Stomach (tissue), 19 donors: ENCODE measurements at regions of chr20 and their contacts with region 1.

Region 1: DNA sequence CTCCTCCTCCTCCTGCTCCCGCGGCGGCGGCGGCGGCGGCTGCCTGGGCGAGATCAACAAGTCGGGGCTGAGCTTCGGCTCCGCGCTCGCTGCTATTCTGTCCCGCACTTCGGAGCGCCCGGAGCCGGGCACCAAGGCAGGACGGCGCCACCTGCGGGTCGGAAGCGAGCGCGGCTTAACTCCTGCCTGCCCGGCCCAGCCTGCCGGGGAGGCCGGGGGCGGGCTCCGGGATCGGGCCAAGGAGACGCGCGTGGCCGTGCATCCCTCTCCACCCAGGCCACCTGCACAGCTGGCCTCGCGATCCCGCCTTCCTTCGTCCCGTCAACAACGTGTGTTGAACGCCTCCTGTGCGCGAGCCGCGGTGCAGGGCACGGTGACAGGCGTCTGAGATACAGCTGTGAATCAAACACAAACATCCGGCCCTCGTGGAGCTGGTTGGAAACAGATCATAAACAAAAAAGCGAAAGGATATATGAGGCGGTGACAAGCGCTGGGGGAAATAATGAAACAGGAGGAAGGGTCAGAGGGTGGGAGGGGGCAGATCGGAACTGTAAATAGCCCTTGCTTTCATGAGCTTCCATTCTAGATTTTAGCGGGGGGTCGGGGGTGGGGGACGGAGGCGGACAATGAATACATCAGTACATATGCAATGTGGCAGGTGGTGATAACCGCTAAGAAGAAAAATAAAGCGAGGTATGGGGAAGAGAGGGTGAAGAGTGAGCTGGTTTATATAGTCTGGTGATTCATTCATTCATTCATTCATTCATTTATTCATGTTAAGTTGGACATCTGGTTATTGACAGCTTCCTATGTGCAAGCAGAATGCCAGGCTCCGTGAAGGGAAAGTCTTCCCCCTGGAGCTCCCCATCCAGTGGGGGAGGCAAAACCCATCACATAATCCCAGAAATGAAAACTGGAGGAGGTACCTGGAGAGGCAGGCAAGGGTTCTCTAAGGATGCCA is 2.0 kb upstream of the KCNB1 start:
- DNase-seq: peak; percentile 80 to 94
- H3K4me3 ChIP-seq: peak overlapping the region; percentile 54 to 69 (median 56)
- H3K27ac ChIP-seq: peak overlapping the region in 1 of 5 donors; percentile 82
- H3K4me1 ChIP-seq: peaks cover 19 to 51% (median 42%) of the 10 kb centered on the region in 4 donors
- H3K27me3 ChIP-seq: peaks cover 0 to 75% (median 37%) of the 10 kb centered on the region in 3 donors
- CTCF ChIP-seq: peak in 5 of 7 experiments; percentile 55 to 67 (median 63)
- EP300 ChIP-seq: no peak
- POLR2A ChIP-seq: no peak

Region 2: GRCh38 chr20:49338061-49338460 is 146.4 kb before region 1 on chr20:
- intact Hi-C with region 1: loop called (anchors 10 kb)
- DNase-seq: no peak
- H3K4me3 ChIP-seq: no peak overlapping the region
- H3K27ac ChIP-seq: no peak overlapping the region
- H3K4me1 ChIP-seq: peaks cover 0 to 7% (median 0%) of the 10 kb centered on the region in 4 donors
- H3K27me3 ChIP-seq: peaks cover 0 to 13% (median 6%) of the 10 kb centered on the region in 3 donors
- CTCF ChIP-seq: no peak
- EP300 ChIP-seq: no peak
- POLR2A ChIP-seq: no peak

Region 3: GRCh38 chr20:49641683-49642656 is 157.5 kb after region 1 on chr20:
- intact Hi-C with region 1: no loop called
- DNase-seq: peak; percentile 51 to 53
- H3K4me3 ChIP-seq: no peak overlapping the region
- H3K27ac ChIP-seq: peak overlapping the region; percentile 32 to 62 (median 59)
- H3K4me1 ChIP-seq: peaks cover 7 to 36% (median 22%) of the 10 kb centered on the region in 4 donors
- H3K27me3 ChIP-seq: no peaks in the 10 kb centered on the region
- CTCF ChIP-seq: no peak
- EP300 ChIP-seq: no peak
- POLR2A ChIP-seq: no peak